Thyroid gland (tissue), 4 donors: ENCODE measurements at regions of chr9 and their contacts with region 1.

Region 1: GRCh38 chr9:34500623-34501267 is 22.0 kb downstream of the ENHO start:
- DNase-seq: peak; percentile 52 to 59
- H3K4me3 ChIP-seq: no peak overlapping the region
- H3K27ac ChIP-seq: no peak overlapping the region
- H3K4me1 ChIP-seq: peaks cover 9 to 14% of the 10 kb centered on the region in 2 donors
- H3K27me3 ChIP-seq: no peaks in the 10 kb centered on the region
- CTCF ChIP-seq: peak; percentile 84 to 98 (median 90)
- POLR2A ChIP-seq: no peak

Region 2: DNA sequence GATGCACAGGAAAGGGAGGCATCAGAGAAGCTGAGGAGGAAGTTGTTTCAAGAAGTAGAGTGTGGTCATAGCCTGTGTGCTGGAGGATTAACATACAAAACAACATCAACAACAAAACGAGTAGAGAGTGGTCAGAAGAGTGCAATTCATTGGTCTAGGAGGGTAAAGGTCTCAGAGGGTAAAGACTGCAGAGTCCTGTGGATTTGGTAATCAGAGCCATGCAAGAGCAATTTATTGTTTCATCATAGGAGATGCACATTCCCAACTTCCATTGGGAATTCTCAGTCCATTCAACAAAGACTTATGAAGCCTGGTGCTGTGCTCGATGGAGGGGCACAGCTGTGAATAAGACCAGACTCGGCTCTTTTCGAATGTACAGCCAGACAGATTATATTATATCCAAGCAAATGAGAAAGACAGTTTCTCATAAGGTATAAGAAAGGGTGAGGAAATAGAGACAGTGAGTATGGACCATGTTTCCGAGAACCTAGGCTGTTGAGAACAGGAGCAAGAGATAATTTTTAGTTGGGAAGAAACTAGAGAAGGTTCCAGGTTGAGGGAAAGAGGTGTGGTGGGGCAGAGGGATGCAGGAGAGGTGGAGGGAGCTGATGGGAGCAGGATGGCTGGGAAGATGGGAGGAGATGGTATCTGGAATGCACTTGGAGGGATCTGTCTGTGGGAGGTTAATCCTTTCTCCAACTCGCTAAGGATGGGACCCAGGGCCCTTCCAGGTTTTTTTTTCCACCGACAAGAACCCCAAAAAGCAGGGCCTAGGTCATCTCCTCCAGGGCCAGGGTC is 116.2 kb before region 1 on chr9:
- intact Hi-C with region 1: no loop called
- DNase-seq: no peak
- H3K4me3 ChIP-seq: no peak overlapping the region
- H3K27ac ChIP-seq: no peak overlapping the region
- H3K4me1 ChIP-seq: peaks cover 13 to 18% of the 10 kb centered on the region in 2 donors
- H3K27me3 ChIP-seq: no peaks in the 10 kb centered on the region
- CTCF ChIP-seq: no peak
- POLR2A ChIP-seq: no peak

Region 3: DNA sequence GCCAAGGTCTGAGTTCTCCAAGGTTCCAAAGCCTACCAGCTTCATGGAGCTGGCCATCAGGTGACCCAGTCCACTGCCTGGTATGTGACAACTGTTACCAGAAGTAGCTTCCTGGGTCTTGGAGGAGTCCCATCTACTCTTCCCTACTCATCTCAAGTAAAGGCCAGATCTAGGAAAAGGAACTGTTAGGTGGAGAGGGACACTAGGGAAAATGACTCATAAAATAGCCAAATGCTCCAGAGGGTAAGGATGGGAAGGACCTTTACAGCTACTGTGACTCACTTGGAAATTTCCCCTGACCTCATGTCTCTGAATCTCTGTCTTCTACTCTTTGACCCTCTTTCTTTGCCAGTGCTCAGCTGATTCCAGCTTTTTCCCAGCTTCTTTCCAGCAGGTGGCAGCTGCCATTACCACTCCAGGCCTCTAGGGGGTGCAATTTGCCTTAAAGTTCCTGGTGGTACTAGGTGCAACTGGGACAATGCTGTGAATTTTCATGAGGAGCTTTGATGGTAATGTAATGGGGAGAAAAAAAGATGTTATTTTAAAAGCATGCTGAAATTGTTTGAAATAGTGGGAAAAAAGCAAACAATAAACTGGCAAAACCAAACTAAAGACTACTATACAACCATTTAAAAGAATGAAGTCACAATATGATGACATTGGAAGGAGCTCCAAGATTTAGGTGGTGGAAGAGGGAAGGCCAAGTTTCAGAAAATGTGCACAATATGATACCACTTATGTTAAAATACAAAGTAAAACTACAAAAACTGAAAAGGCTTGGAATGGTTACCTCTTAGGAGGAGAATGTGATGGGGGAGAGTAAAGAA is 97.0 kb before region 1 on chr9:
- intact Hi-C with region 1: loop called (anchors 2 kb)
- DNase-seq: peak; percentile 68 to 71
- H3K4me3 ChIP-seq: no peak overlapping the region
- H3K27ac ChIP-seq: no peak overlapping the region
- H3K4me1 ChIP-seq: no peaks in the 10 kb centered on the region
- H3K27me3 ChIP-seq: no peaks in the 10 kb centered on the region
- CTCF ChIP-seq: peak; percentile 79 to 96 (median 88)
- POLR2A ChIP-seq: no peak

Region 4: DNA sequence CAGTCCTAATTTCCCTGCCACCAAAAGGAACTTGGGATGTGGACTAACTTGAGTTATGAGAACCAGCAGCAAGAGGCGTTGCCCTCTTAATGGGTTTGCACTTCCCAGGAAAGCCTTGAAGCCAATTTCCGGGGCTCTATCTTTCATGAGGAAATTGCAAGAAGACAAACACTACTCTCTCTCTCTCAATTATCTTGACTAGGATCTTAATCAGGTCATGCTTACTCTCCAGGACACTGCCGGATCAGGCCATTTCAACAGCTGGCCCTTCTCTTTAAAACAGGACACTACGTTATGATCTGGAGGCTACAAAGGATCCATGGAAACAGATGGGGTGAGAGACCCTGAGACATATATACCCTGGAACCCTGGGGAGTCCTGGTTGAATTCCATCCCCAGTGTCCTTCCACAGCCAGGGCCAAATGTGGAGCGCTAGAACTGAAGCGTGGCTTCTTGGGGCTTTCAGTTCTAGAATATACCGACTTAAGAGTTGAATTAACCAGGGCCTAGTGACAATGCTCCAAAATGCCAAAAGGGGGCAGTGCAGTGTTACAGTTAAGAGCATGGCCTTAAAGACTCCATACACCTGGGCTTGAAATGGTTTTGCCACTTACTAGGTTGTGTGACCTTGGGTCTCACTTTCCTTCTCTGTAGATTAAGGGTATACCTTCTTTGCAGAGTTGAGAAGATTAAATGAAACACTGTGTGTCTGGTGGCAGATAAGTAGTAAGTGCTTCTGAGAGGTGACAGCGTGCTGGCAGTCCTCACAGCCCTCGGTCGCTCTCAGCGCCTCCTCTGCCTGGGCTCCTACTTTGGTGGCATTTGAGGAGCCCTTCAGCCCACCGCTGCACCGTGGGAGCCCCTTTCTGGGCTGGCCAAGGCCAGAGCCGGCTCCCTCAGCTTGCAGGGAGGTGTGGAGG is 63.5 kb before region 1 on chr9:
- intact Hi-C with region 1: loop called (anchors 5 kb)
- DNase-seq: peak; percentile 50 to 57
- H3K4me3 ChIP-seq: no peak overlapping the region
- H3K27ac ChIP-seq: no peak overlapping the region
- H3K4me1 ChIP-seq: peaks cover 0 to 5% of the 10 kb centered on the region in 2 donors
- H3K27me3 ChIP-seq: no peaks in the 10 kb centered on the region
- CTCF ChIP-seq: peak; percentile 29 to 63 (median 62)
- POLR2A ChIP-seq: no peak